Activated CD4-positive, alpha-beta T cell treated with anti-CD3 and anti-CD28 coated beads, Interleukin-2, amount 10 ng/mL, durations not matched to agents 7 days and 5 days (primary cell): ENCODE measurements at regions of chr16 and their contacts with region 1.

Region 1: GRCh38 chr16:12805066-12805465 is 1.4 kb upstream of the CPPED1 start:
- DNase-seq: no peak
- H3K4me3 Mint-ChIP-seq: no peak overlapping the region
- H3K27ac Mint-ChIP-seq: no peak overlapping the region
- H3K4me1 Mint-ChIP-seq: peaks cover 37% of the 10 kb centered on the region
- H3K27me3 Mint-ChIP-seq: no peaks in the 10 kb centered on the region

Region 2: GRCh38 chr16:12815361-12815760 is 10.3 kb after region 1 on chr16:
- CTCF ChIA-PET with region 1: interaction called, 12 read pairs
- POLR2A ChIA-PET with region 1: interaction called, 6 read pairs
- DNase-seq: no peak
- H3K4me3 Mint-ChIP-seq: no peak overlapping the region
- H3K27ac Mint-ChIP-seq: no peak overlapping the region
- H3K4me1 Mint-ChIP-seq: peaks cover 37% of the 10 kb centered on the region
- H3K27me3 Mint-ChIP-seq: no peaks in the 10 kb centered on the region